ENCODE measurements at regions of chr1 and their contacts with region 1.

Region 1: GRCh38 chr1:28877132-28877781 is 37.1 kb upstream of the EPB41 start:
- DNase-seq: peak; percentile 45 to 66
- ATAC-seq: peak; percentile 70 to 76
- H3K4me3 ChIP-seq: no peak overlapping the region
- H3K27ac ChIP-seq: no peak overlapping the region
- H3K4me1 ChIP-seq: no peaks in the 10 kb centered on the region
- H3K27me3 ChIP-seq: no peaks in the 10 kb centered on the region
- CTCF ChIP-seq: peak; percentile 89 to 95 (median 91)
- POLR2A ChIP-seq: no peak

Region 2: GRCh38 chr1:28359592-28360239 is 517.5 kb before region 1 on chr1:
- in situ Hi-C with region 1: loop called in 3 of 4 experiments (anchors 10 to 25 kb)
- intact Hi-C with region 1: loop called (anchors 5 kb)
- DNase-seq: peak; percentile 11 to 52
- ATAC-seq: peak in 1 of 2 donors; percentile 64
- H3K4me3 ChIP-seq: no peak overlapping the region
- H3K27ac ChIP-seq: no peak overlapping the region
- H3K4me1 ChIP-seq: no peaks in the 10 kb centered on the region
- H3K27me3 ChIP-seq: no peaks in the 10 kb centered on the region
- CTCF ChIP-seq: peak; percentile 42 to 63 (median 56)
- POLR2A ChIP-seq: no peak

Region 3: DNA sequence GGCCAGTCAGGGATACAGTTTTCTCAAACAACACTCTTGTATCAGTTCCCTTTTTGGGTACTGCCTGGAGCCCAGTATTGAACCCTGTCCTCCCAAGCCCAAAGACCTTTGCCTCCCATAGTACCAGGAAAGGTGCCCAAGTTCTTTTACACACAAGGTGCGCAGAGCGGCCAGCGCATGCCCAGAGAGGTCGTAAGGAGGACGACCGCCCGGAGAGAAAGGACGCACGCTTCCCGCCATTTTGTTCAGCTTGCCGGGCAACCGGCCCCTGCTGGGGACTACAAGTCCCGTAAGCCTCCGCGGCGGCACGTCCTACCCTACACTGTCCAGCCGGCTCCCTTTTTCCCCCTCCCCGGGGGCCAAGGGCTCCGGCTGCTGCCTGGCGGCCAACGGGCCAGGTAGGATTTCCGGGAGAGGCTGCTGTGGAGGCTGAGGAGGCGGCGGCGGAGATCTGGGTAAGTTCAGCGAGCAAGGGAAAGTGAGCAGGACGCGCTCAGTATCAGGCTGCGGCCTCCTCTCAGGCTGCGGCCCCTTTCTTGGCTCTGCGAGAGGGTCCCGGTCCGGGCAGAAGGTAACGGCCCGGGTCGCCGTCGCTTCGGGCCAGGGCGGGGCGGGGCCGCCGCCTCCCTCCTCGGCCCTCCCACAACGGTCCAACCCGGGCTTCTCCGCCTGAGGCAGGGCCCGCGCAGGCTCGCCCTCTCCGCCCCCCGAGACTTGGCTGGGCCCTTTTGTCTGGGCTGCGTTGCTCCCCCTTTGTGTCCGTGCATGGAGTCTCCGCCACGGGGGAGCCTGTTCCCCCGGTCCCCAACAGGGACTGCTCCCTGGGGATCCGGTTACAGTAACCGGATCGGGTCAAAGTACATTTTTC is 507.7 kb before region 1 on chr1 and contains the start of gene PHACTR4:
- in situ Hi-C with region 1: loop called in 2 of 4 experiments (anchors 10 to 25 kb)
- intact Hi-C with region 1: loop called (anchors 2 kb)
- DNase-seq: peak; percentile 87 to 93
- ATAC-seq: peak; percentile 95 to 97
- H3K4me3 ChIP-seq: peak within 1 kb of the TSS; percentile 75 to 92 (median 86)
- H3K27ac ChIP-seq: peak within 1 kb of the TSS; percentile 88 to 95 (median 93)
- H3K4me1 ChIP-seq: peaks cover 9 to 16% of the 10 kb centered on the region in 2 donors
- H3K27me3 ChIP-seq: no peaks in the 10 kb centered on the region
- CTCF ChIP-seq: no peak
- POLR2A ChIP-seq: peak; percentile 88 to 90
- total RNA-seq, gene PHACTR4: 9.1 to 17.7 (median 13.4) TPM

Region 4: DNA sequence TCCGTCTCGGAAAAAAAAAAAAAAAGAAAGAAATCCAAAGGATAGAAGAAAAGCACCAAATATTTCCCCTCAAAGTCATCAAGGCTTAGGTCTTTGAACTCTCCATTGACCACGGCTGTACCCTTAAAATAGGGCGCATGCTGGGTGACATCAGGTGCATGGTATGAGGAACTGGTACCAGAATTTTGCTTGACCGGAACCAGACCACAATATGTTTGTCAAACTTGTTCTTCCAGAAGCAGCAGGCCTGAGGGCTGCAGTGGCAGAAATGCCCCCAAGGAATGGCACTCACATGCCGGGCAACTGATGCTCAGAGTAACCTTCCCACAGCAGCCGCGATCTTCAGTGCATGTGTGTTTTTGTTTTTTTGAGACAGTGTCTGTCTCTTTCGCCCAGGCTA is 350.4 kb before region 1 on chr1:
- in situ Hi-C with region 1: loop called in 2 of 4 experiments (anchors 10 to 25 kb)
- intact Hi-C with region 1: no loop called
- DNase-seq: no peak
- ATAC-seq: no peak
- H3K4me3 ChIP-seq: no peak overlapping the region
- H3K27ac ChIP-seq: no peak overlapping the region
- H3K4me1 ChIP-seq: no peaks in the 10 kb centered on the region
- H3K27me3 ChIP-seq: no peaks in the 10 kb centered on the region
- CTCF ChIP-seq: no peak
- POLR2A ChIP-seq: no peak

Region 5: DNA sequence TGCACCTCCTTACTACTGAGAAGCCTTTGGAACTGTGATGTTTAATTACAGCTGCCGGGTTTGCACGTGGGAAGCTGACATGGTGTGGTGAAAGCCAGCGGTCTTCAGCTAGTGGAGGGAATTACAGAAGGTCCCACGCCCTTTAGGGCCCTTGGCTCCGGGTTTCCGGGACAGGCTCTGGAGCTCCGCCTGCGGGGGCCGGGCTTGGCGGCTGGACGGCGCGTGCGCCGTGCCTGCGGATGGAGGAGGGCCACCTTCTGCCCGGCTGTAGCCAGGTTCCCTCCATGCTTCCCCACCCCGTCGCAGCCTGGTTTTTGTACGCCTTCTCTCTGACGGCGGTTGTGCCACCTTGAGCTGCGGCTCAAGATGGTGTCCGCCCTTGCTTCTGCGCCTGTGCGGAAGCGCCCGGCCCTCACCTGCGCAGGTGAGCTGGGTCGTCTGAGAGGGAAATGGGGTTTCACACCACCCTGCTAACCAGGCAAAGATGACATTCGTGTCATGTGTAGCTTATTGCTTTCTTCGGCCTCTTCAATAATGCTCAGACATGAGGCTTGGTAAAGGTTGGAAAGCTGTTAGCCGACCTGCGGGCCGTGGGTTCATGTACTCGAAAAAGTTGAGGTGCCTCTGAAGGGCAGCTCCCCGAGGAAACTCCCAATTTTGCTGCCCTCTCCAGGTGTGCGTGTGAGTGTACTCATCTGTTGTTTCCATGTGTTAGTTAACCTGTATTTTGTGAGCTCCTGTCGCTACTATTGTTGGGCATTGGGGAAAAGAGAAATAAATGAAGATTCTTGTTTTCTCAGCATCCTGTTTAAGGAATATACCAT is 101.9 kb before region 1 on chr1:
- in situ Hi-C with region 1: loop called in 1 of 4 experiments (anchors 5 kb)
- intact Hi-C with region 1: no loop called
- DNase-seq: peak; percentile 23 to 51
- ATAC-seq: peak in 1 of 2 donors; percentile 71
- H3K4me3 ChIP-seq: peak overlapping the region in 3 of 4 donors; percentile 32 to 44 (median 40)
- H3K27ac ChIP-seq: no peak overlapping the region
- H3K4me1 ChIP-seq: no peaks in the 10 kb centered on the region
- H3K27me3 ChIP-seq: no peaks in the 10 kb centered on the region
- CTCF ChIP-seq: no peak
- POLR2A ChIP-seq: no peak

Region 6: GRCh38 chr1:28789412-28789811 is 87.8 kb before region 1 on chr1:
- in situ Hi-C with region 1: loop called in 3 of 4 experiments (anchors 5 kb)
- intact Hi-C with region 1: loop called (anchors 1 kb)
- DNase-seq: no peak
- ATAC-seq: no peak
- H3K4me3 ChIP-seq: no peak overlapping the region
- H3K27ac ChIP-seq: no peak overlapping the region
- H3K4me1 ChIP-seq: peaks cover 11 to 15% of the 10 kb centered on the region in 2 donors
- H3K27me3 ChIP-seq: no peaks in the 10 kb centered on the region
- CTCF ChIP-seq: no peak
- POLR2A ChIP-seq: no peak

Region 7: GRCh38 chr1:28822788-28823187 is 54.5 kb before region 1 on chr1:
- in situ Hi-C with region 1: no loop called
- intact Hi-C with region 1: no loop called
- DNase-seq: no peak
- ATAC-seq: no peak
- H3K4me3 ChIP-seq: no peak overlapping the region
- H3K27ac ChIP-seq: no peak overlapping the region
- H3K4me1 ChIP-seq: no peaks in the 10 kb centered on the region
- H3K27me3 ChIP-seq: no peaks in the 10 kb centered on the region
- CTCF ChIP-seq: no peak
- POLR2A ChIP-seq: no peak

Region 8: DNA sequence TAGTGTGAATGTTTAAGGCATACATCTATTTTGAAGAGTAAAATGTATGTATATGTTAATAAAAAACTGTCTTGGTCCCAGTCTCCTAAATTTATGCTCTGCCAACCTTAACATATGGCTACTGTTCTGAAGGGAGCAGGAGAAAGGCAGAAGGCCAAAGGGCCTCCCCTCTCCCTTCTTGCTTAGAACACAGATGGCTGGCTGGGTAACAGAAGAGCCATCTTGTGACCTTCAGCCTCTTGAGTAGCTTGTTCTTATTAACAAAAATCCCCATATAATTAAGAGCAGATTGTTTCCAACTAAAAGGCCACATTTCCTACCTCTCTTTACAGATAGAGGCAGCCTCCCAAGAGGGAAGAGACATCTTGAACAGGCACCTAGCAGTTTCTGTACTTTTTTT is 73.2 kb after region 1 on chr1:
- in situ Hi-C with region 1: no loop called
- intact Hi-C with region 1: no loop called
- DNase-seq: no peak
- ATAC-seq: no peak
- H3K4me3 ChIP-seq: no peak overlapping the region
- H3K27ac ChIP-seq: no peak overlapping the region
- H3K4me1 ChIP-seq: peaks cover 0 to 20% of the 10 kb centered on the region in 2 donors
- H3K27me3 ChIP-seq: no peaks in the 10 kb centered on the region
- CTCF ChIP-seq: no peak
- POLR2A ChIP-seq: no peak

Measured in gastrocnemius medialis (tissue), 4 donors.